MCF 10A (cell line): ENCODE measurements at regions of chr3 and their contacts with region 1.

Region 1: DNA sequence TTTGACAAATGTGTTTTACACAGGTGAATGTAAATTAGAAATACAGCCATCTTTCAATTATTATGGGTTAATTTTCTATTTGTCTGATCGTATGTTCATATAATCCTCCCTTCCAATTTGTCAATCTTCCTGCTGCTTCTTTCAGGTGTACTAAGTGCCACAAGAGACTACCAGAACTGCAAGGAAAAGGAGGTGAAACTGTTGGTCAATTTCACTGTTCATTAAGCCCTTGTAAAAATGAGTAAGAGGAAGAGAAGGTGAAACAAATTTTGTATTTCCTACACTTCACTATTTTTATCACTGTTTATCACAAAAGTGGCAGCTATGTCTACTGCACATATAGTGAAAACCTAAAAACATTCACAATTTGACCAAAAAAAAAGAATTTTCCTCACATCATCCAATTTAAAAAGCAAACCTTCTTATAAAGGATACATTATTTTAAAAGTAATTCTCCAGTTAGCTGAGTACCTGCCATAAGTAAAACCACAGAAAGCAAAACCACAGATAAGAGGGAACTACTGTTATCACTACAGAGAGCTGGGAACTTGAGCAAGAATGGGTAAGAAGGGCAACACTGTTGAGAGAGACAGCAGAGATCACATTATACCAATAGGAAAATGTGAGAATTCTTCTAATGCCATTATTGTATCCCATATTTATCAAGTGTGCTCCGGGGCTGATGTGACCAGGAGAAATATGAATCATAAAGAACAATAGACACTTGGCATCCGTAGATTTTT is 163.0 kb downstream of the TBC1D5 start:
- DNase-seq: peak; percentile 33
- H3K4me3 Mint-ChIP-seq: no peak overlapping the region
- H3K27ac Mint-ChIP-seq: no peak overlapping the region
- H3K4me1 Mint-ChIP-seq: peaks cover 11% of the 10 kb centered on the region
- H3K27me3 Mint-ChIP-seq: no peaks in the 10 kb centered on the region
- CTCF ChIP-seq: no peak

Region 2: DNA sequence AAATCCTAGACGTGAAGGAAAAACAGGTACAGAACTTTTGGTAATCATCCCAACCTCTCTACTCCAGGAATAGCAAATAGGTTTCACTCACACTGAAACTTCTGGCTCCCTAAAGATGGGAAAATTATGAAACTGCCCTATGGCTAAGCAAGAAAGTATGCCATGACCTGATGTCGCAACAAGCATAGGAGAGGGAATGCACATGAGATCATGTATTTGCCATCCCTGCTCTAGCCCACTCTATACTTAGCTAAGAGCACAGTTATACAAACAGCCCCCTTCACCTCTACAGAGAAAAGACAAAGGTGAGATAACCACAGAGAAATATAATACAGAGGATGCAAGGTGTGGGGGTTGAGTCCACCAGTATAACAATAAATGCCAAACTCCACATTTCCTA is 60.3 kb after region 1 on chr3:
- CTCF ChIA-PET with region 1: no interaction called
- POLR2A ChIA-PET with region 1: interaction called, 4 read pairs
- intact Hi-C with region 1: loop called (anchors 5 kb)
- DNase-seq: peak; percentile 97
- H3K4me3 Mint-ChIP-seq: peak overlapping the region; percentile 22
- H3K27ac Mint-ChIP-seq: peak overlapping the region; percentile 92
- H3K4me1 Mint-ChIP-seq: peaks cover 29% of the 10 kb centered on the region
- H3K27me3 Mint-ChIP-seq: no peaks in the 10 kb centered on the region
- CTCF ChIP-seq: no peak

Region 3: DNA sequence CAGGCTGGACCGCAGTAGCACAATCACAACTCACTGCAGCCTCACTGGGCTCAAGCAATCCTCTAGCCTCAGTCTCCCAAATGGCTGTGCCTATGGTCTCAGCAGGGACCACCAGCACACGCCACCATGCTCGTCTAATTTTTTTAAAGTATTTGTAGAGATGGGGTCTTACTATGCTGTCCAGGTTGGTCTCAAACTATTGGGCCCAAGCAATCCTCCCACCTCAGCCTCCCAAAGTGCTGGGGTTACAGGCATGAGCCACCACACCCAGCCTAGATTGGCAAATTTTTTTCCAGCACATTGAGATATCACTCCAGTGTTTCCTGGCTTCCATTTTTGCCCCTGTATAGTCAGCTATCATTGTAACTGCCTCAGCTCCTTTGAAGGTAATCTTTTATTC is 144.7 kb after region 1 on chr3:
- CTCF ChIA-PET with region 1: no interaction called
- POLR2A ChIA-PET with region 1: no interaction called
- intact Hi-C with region 1: no loop called
- DNase-seq: no peak
- H3K4me3 Mint-ChIP-seq: no peak overlapping the region
- H3K27ac Mint-ChIP-seq: no peak overlapping the region
- H3K4me1 Mint-ChIP-seq: peaks cover 6% of the 10 kb centered on the region
- H3K27me3 Mint-ChIP-seq: no peaks in the 10 kb centered on the region
- CTCF ChIP-seq: no peak